ENCODE measurements at regions of chr9 and their contacts with region 1.

Region 1: DNA sequence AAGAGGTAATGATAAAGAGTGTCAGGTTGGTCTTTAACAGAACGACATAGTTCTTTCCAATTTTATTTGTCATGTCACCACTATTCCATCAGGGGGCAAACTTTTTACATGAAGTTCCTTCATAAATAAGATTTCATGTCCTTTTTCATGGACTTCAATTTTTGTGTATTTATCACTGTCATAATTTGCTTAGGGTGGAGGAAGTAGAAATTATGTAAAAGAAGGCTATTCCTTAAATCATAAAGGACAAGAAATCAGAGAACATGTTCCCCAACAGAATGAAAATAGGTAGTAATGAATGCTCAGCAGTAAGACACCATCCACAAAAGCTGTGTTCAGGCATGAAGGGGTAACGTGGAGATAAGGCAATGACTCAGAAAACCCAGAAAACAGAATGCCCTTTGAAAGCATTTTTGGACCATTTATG is 72.7 kb downstream of the ZFAND5 start:
- DNase-seq: no peak
- H3K4me3 ChIP-seq: no peak overlapping the region
- H3K27ac ChIP-seq: no peak overlapping the region
- H3K4me1 ChIP-seq: no peaks in the 10 kb centered on the region
- H3K27me3 ChIP-seq: no peaks in the 10 kb centered on the region
- CTCF ChIP-seq: peak; percentile 36 to 61 (median 52)

Region 2: GRCh38 chr9:72140582-72140981 is 151.7 kb before region 1 on chr9:
- intact Hi-C with region 1: no loop called
- DNase-seq: no peak
- H3K4me3 ChIP-seq: no peak overlapping the region
- H3K27ac ChIP-seq: no peak overlapping the region
- H3K4me1 ChIP-seq: no peaks in the 10 kb centered on the region
- H3K27me3 ChIP-seq: no peaks in the 10 kb centered on the region
- CTCF ChIP-seq: no peak

Region 3: GRCh38 chr9:72254901-72255535 is 37.3 kb before region 1 on chr9:
- intact Hi-C with region 1: no loop called
- DNase-seq: no peak
- H3K4me3 ChIP-seq: no peak overlapping the region
- H3K27ac ChIP-seq: no peak overlapping the region
- H3K4me1 ChIP-seq: no peaks in the 10 kb centered on the region
- H3K27me3 ChIP-seq: no peaks in the 10 kb centered on the region
- CTCF ChIP-seq: no peak

Region 4: DNA sequence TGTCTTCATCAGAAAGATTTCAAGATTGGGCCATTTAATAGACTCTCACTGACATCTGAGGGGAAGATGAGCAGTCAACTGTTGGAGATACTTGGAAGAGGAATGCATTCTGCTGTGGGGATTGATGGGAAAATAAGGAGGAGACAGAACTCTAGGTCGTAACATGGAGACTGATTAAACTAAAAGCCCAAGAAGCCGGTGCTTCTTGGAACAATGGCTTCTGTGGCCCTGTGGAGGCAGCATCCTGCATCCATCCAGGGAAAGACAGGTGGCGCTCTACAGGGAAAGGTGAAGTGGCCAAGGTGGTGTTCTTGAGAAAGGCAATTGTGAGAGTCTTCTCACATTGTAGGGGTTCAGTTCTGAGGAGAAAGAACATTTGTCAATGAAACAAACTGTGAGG is 41.4 kb after region 1 on chr9:
- intact Hi-C with region 1: no loop called
- DNase-seq: no peak
- H3K4me3 ChIP-seq: no peak overlapping the region
- H3K27ac ChIP-seq: no peak overlapping the region
- H3K4me1 ChIP-seq: no peaks in the 10 kb centered on the region
- H3K27me3 ChIP-seq: no peaks in the 10 kb centered on the region
- CTCF ChIP-seq: no peak

Region 5: DNA sequence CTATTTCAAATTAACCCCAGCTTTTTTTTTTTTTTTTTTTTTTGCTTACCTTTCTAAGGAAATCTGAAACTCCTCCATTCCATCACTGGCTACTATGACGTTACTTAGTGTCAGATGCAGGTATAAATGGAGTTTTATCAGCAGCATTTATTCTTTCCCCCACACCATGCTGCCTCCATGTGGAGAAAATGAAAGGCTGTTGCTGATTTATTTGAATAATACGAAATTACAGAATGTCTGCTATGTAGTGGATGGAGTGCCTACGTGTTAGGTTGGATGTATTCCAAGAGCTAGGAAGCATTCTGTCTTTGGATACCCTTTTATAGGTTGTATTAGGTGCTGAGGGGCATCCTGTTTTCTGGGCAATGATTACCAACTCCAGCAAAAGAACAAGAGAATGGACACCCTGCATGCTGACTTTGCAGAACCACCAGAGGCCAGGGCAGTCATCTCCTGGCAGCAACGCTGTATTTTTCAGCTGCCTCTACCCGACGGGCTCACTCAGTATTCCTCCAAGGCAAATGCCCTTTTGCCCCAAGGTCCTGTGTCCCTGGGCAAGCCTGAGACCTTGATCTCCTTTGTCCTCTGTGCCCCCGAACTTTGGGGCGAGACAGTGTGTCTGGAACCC is 461.1 kb after region 1 on chr9:
- intact Hi-C with region 1: loop called (anchors 5 kb)
- DNase-seq: no peak
- H3K4me3 ChIP-seq: no peak overlapping the region
- H3K27ac ChIP-seq: no peak overlapping the region
- H3K4me1 ChIP-seq: no peaks in the 10 kb centered on the region
- H3K27me3 ChIP-seq: no peaks in the 10 kb centered on the region
- CTCF ChIP-seq: peak in 1 of 3 experiments; percentile 19